K562 (cell line): ENCODE measurements at regions of chr10 and their contacts with region 1.

Region 1: GRCh38 chr10:74176380-74177139 is 25.5 kb downstream of the ADK start:
- DNase-seq: peak; percentile 95 to 97 (median 97)
- ATAC-seq: peak; percentile 93
- H3K4me3 ChIP-seq: peak overlapping the region; percentile 73
- H3K27ac ChIP-seq: peak overlapping the region; percentile 93
- H3K4me1 ChIP-seq: peaks cover 13 to 17% of the 10 kb centered on the region in 2 experiments; a peak in 4 of 5 replicates
- H3K27me3 ChIP-seq: no peaks in the 10 kb centered on the region
- CTCF ChIP-seq: no peak
- EP300 ChIP-seq: no peak
- POLR2A ChIP-seq: peak; percentile 95
- RAD21 ChIP-seq: no peak

Region 2: DNA sequence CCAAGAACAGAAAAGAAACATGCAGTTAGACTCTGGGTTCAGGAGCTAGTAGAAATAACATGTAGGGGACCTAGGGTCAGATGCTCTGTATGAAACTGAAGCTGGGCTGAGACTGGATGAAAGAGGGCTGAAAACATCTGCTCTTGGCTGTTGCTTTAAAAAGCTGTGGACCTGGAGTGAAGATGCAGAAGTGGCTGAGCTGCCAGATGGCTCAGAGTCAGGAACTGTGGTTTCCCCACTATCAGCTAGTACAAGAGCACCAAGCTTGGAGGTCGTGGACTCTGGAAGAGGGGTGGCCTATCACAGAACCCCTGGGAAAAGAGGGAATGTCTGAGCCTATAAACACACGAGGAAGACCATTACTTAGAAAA is 19.7 kb before region 1 on chr10:
- CTCF ChIA-PET with region 1: no interaction called
- POLR2A ChIA-PET with region 1: interaction called, 18 read pairs
- in situ Hi-C with region 1: no loop called
- intact Hi-C with region 1: no loop called
- DNase-seq: peak; percentile 38 to 57 (median 49)
- ATAC-seq: peak; percentile 22
- H3K4me3 ChIP-seq: no peak overlapping the region
- H3K27ac ChIP-seq: no peak overlapping the region
- H3K4me1 ChIP-seq: peaks cover 4 to 26% of the 10 kb centered on the region in 2 experiments; a peak in 4 of 5 replicates
- H3K27me3 ChIP-seq: no peaks in the 10 kb centered on the region
- CTCF ChIP-seq: no peak
- EP300 ChIP-seq: no peak
- POLR2A ChIP-seq: no peak
- RAD21 ChIP-seq: no peak

Region 3: DNA sequence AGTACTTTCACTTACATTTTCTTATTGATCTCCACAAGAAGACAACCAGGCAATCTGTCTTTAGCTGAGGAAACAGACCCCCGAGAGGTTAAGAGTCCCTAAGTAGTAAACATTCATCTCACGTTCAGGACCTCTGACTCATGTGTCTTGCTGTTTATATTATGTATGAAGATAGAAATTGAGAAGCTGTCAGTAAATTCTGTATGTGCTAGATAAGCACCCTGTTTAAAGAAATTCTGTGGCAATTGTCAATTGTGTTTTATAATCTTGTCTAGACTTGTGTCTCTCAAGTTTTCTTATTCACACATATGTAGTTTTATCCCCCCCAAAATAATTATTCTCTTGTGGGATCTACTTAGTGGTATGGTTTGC is 11.0 kb before region 1 on chr10:
- CTCF ChIA-PET with region 1: no interaction called
- POLR2A ChIA-PET with region 1: interaction called, 43 read pairs
- in situ Hi-C with region 1: no loop called
- intact Hi-C with region 1: no loop called
- DNase-seq: peak; percentile 33 to 44 (median 39)
- ATAC-seq: peak; percentile 50; the same call in 2 of the 3 replicates
- H3K4me3 ChIP-seq: no peak overlapping the region
- H3K27ac ChIP-seq: no peak overlapping the region
- H3K4me1 ChIP-seq: peaks cover 0 to 8% of the 10 kb centered on the region in 2 experiments; a peak in 3 of 5 replicates
- H3K27me3 ChIP-seq: no peaks in the 10 kb centered on the region
- CTCF ChIP-seq: no peak
- EP300 ChIP-seq: no peak
- POLR2A ChIP-seq: no peak
- RAD21 ChIP-seq: no peak

Region 4: DNA sequence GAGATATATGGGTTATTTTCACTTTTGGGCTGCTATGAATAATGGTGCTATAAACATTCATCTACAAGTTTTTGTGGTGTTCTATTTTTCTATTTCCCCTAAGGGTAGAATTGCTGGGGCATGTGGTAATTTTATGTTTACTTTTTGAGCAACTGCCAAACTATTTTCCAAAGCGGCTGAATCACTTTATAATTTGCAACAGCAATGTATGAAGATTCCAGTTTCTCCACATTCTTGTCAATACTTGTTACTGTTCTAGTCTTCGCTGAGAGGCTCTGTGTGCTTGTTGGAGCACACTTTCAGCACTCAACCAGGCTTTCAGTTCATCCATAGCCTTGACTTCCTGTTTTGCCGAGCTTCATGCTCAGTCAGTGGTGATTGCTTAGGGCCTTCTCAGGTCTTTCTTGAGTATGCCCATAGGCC is 13.4 kb after region 1 on chr10:
- CTCF ChIA-PET with region 1: no interaction called
- POLR2A ChIA-PET with region 1: interaction called, 41 read pairs
- in situ Hi-C with region 1: no loop called
- intact Hi-C with region 1: no loop called
- DNase-seq: peak in 2 of 4 experiments; percentile 32 to 62
- ATAC-seq: peak; percentile 84
- H3K4me3 ChIP-seq: no peak overlapping the region
- H3K27ac ChIP-seq: peak overlapping the region; percentile 58
- H3K4me1 ChIP-seq: peaks cover 4 to 7% of the 10 kb centered on the region in 2 experiments; a peak in 2 of 5 replicates
- H3K27me3 ChIP-seq: no peaks in the 10 kb centered on the region
- CTCF ChIP-seq: no peak
- EP300 ChIP-seq: no peak
- POLR2A ChIP-seq: no peak
- RAD21 ChIP-seq: no peak

Region 5: DNA sequence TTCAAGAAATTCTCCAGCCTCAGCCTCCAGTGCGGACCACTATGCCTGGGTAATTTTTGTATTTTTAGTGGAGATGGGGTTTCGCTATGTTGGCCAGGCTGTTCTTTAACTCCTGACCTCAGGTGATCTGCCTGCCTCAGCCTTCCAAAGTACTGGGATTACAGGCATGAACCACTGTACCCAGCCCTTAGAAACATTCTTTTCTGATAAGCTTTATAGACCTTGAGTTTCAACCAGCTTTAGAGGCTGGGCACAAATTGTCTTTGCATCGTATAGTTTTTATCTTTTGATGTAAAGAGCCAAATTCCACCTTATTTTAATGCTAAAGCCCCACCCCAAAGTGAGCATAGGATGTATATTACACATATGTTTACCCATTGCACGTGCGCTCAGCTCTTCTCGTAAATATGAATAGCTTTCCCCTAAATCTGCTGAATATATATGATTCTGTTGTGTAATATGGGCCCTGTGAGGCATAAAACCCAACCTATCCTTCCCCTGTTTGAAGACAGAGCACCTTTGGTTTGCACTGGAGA is 99.3 kb after region 1 on chr10:
- CTCF ChIA-PET with region 1: no interaction called
- POLR2A ChIA-PET with region 1: no interaction called
- in situ Hi-C with region 1: no loop called
- intact Hi-C with region 1: no loop called
- DNase-seq: no peak
- ATAC-seq: no peak
- H3K4me3 ChIP-seq: no peak overlapping the region
- H3K27ac ChIP-seq: no peak overlapping the region
- H3K4me1 ChIP-seq: no peaks in the 10 kb centered on the region
- H3K27me3 ChIP-seq: no peaks in the 10 kb centered on the region
- CTCF ChIP-seq: no peak
- EP300 ChIP-seq: no peak
- POLR2A ChIP-seq: no peak
- RAD21 ChIP-seq: no peak

Region 6: DNA sequence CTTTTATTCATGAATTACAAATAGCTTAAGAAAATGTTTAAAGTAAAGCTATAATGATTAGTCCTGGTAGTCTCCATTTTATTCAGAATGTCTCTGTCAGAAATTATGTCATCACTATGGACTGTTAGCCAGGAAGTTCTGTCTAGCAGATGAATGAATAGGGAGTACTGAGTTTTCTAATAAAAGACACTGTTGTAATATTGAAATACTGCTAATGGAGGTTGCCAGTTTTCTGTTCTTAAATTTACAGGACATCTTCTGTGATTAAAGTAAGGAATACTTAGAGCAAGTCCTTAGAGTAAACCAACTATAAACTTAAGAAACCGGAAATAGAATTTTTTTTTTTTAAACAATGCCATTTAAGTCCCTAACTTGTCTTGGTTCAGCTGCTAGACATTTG is 284.3 kb after region 1 on chr10:
- CTCF ChIA-PET with region 1: no interaction called
- POLR2A ChIA-PET with region 1: no interaction called
- in situ Hi-C with region 1: no loop called
- intact Hi-C with region 1: no loop called
- DNase-seq: no peak
- ATAC-seq: no peak
- H3K4me3 ChIP-seq: no peak overlapping the region
- H3K27ac ChIP-seq: no peak overlapping the region
- H3K4me1 ChIP-seq: no peaks in the 10 kb centered on the region
- H3K27me3 ChIP-seq: no peaks in the 10 kb centered on the region
- CTCF ChIP-seq: no peak
- EP300 ChIP-seq: no peak
- POLR2A ChIP-seq: no peak
- RAD21 ChIP-seq: no peak